Pancreas (tissue), 10 donors: ENCODE measurements at regions of chr7 and their contacts with region 1.

Region 1: DNA sequence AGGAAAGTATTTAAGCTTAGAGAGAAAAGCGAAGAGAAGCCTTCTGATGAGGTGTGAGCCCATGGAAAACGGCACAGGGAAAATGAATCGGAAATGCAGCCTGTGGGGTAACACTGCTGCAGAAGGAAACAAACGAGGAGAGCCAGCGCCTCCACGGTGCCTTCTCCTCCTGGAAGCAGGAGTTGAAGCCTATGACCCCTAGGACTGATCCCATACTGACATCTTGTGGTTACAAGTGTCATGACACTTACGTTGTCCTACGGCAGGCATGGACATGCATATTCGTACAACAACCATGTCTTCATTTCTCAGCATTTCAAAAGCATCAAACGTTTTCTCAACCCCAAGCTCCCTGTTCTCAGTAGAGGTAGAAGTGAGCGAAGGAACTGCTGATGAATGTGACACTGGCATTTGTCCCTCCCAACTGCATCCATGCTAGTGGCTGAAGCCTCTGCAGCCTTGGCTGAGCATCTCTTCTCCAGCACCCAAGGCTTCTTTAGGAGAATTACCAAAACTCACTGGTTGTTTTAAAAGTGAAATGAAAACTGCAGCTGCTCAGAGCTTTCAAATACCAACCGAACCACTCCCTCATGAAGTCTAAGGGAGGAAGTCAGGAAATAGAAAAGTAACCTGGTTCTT is 160.2 kb downstream of the JAZF1 start:
- DNase-seq: peak; percentile 41 to 65 (median 56)
- ATAC-seq: peak; percentile 87 to 99 (median 97)
- H3K4me3 ChIP-seq: no peak overlapping the region
- H3K27ac ChIP-seq: no peak overlapping the region
- H3K4me1 ChIP-seq: peaks cover 0 to 4% (median 0%) of the 10 kb centered on the region in 3 donors
- H3K27me3 ChIP-seq: no peaks in the 10 kb centered on the region
- CTCF ChIP-seq: peak; percentile 75 to 80 (median 79)

Region 2: GRCh38 chr7:27196287-27196767 is 824.1 kb before region 1 on chr7:
- intact Hi-C with region 1: loop called in 1 of 3 experiments (anchors 10 kb)
- DNase-seq: peak in 5 of 6 donors; percentile 47 to 90 (median 71)
- ATAC-seq: peak in 3 of 4 donors; percentile 48 to 63 (median 63)
- H3K4me3 ChIP-seq: no peak overlapping the region
- H3K27ac ChIP-seq: no peak overlapping the region
- H3K4me1 ChIP-seq: peaks cover 0 to 17% (median 6%) of the 10 kb centered on the region in 3 donors
- H3K27me3 ChIP-seq: peaks cover 0 to 88% (median 41%) of the 10 kb centered on the region in 4 donors
- CTCF ChIP-seq: peak; percentile 15 to 69 (median 60)

Region 3: GRCh38 chr7:27689591-27690164 is 330.7 kb before region 1 on chr7:
- intact Hi-C with region 1: loop called in 1 of 3 experiments (anchors 5 kb)
- DNase-seq: peak in 1 of 6 donors; percentile 14
- ATAC-seq: peak in 3 of 4 donors; percentile 69 to 79 (median 71)
- H3K4me3 ChIP-seq: no peak overlapping the region
- H3K27ac ChIP-seq: no peak overlapping the region
- H3K4me1 ChIP-seq: no peaks in the 10 kb centered on the region
- H3K27me3 ChIP-seq: no peaks in the 10 kb centered on the region
- CTCF ChIP-seq: no peak

Region 4: DNA sequence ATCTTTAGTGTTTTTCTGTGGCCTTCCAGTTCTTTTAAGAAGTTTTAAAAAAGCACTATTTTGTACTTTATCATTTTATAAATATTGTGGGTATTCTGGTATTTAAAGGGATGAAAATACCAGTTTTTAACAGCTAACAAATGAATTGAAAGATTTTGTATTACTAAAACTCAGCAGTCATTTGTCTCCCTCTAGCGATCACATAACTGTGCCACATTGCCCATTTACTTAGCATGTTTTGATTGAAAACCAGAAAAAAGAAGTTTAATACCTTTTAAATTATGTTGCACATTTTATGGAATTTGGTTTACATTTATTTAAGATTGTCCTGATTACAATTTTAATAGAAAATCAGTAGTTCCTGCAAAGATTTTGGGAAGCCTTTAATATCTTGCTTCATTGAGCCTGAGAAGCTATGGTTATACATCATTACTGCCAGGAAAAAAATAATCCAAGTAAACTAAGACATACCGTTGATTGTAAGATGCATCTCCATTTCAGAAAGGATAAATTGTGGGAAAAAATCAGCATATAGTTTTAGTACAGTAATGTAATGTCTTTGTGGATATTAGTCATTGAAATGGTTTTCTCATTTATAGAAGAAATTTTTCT is 245.6 kb before region 1 on chr7:
- intact Hi-C with region 1: loop called in 1 of 3 experiments (anchors 5 kb)
- DNase-seq: no peak
- ATAC-seq: peak in 3 of 4 donors; percentile 60 to 66 (median 66)
- H3K4me3 ChIP-seq: no peak overlapping the region
- H3K27ac ChIP-seq: no peak overlapping the region
- H3K4me1 ChIP-seq: peaks cover 0 to 4% (median 0%) of the 10 kb centered on the region in 3 donors
- H3K27me3 ChIP-seq: no peaks in the 10 kb centered on the region
- CTCF ChIP-seq: peak in 3 of 4 donors; percentile 20 to 38 (median 37)

Region 5: GRCh38 chr7:28083164-28083997 is 63.0 kb after region 1 on chr7:
- intact Hi-C with region 1: no loop called
- DNase-seq: no peak
- ATAC-seq: peak in 2 of 4 donors; percentile 36 to 65
- H3K4me3 ChIP-seq: no peak overlapping the region
- H3K27ac ChIP-seq: no peak overlapping the region
- H3K4me1 ChIP-seq: no peaks in the 10 kb centered on the region
- H3K27me3 ChIP-seq: no peaks in the 10 kb centered on the region
- CTCF ChIP-seq: no peak

Region 6: GRCh38 chr7:28774261-28774988 is 754.0 kb after region 1 on chr7:
- intact Hi-C with region 1: no loop called
- DNase-seq: no peak
- ATAC-seq: peak; percentile 38 to 72 (median 58)
- H3K4me3 ChIP-seq: no peak overlapping the region
- H3K27ac ChIP-seq: peak overlapping the region in 2 of 4 donors; percentile 10 to 45
- H3K4me1 ChIP-seq: peaks cover 6 to 12% (median 12%) of the 10 kb centered on the region in 3 donors
- H3K27me3 ChIP-seq: no peaks in the 10 kb centered on the region
- CTCF ChIP-seq: no peak